ENCODE measurements at regions of chr5 and their contacts with region 1.

Region 1: GRCh38 chr5:132556763-132557477 is at the start of gene RAD50:
- DNase-seq: peak; percentile 79 to 96 (median 88)
- ATAC-seq: peak; percentile 94
- H3K4me3 ChIP-seq: peak within 1 kb of the TSS; percentile 83
- H3K4me3 Mint-ChIP-seq: peak within 1 kb of the TSS; percentile 95
- H3K27ac ChIP-seq: peak within 1 kb of the TSS; percentile 76 to 78
- H3K27ac Mint-ChIP-seq: peak within 1 kb of the TSS; percentile 98
- H3K4me1 ChIP-seq: peaks cover 22% of the 10 kb centered on the region
- H3K4me1 Mint-ChIP-seq: peaks cover 43% of the 10 kb centered on the region
- H3K27me3 ChIP-seq: no peaks in the 10 kb centered on the region
- H3K27me3 Mint-ChIP-seq: no peaks in the 10 kb centered on the region
- CTCF ChIP-seq: no peak
- total RNA-seq, gene RAD50: 12.7 to 13.4 TPM

Region 2: DNA sequence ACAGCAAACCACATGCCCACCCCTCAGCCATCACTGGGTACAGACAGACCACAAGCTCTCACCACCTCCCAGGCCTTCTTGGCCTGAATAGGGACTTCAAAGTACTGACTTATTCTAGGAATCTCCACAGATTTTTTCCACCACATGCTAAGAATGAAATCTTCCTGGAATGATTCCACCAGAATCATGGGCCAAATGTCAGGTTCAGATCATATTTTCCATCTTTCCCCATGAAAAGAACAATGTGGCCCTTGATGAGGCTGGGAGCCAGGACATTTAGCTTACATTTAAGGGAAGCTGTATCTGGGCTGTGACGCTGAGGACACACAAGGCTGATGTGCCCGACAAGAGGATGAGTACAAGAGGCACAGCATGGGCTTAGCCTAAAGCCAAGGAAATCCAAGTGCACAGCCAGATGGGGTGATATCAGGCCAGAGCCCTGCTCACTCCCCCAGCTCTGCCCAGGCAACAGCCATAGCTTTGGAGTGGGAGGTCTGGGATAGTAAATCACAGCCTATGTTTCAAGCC is 573.6 kb before region 1 on chr5:
- CTCF ChIA-PET with region 1: no interaction called
- POLR2A ChIA-PET with region 1: no interaction called
- intact Hi-C with region 1: no loop called
- DNase-seq: no peak
- ATAC-seq: no peak
- H3K4me3 ChIP-seq: no peak overlapping the region
- H3K4me3 Mint-ChIP-seq: no peak overlapping the region
- H3K27ac ChIP-seq: no peak overlapping the region
- H3K27ac Mint-ChIP-seq: no peak overlapping the region
- H3K4me1 ChIP-seq: peaks cover 10% of the 10 kb centered on the region
- H3K4me1 Mint-ChIP-seq: peaks cover 19% of the 10 kb centered on the region
- H3K27me3 ChIP-seq: no peaks in the 10 kb centered on the region
- H3K27me3 Mint-ChIP-seq: no peaks in the 10 kb centered on the region
- CTCF ChIP-seq: no peak

Region 3: DNA sequence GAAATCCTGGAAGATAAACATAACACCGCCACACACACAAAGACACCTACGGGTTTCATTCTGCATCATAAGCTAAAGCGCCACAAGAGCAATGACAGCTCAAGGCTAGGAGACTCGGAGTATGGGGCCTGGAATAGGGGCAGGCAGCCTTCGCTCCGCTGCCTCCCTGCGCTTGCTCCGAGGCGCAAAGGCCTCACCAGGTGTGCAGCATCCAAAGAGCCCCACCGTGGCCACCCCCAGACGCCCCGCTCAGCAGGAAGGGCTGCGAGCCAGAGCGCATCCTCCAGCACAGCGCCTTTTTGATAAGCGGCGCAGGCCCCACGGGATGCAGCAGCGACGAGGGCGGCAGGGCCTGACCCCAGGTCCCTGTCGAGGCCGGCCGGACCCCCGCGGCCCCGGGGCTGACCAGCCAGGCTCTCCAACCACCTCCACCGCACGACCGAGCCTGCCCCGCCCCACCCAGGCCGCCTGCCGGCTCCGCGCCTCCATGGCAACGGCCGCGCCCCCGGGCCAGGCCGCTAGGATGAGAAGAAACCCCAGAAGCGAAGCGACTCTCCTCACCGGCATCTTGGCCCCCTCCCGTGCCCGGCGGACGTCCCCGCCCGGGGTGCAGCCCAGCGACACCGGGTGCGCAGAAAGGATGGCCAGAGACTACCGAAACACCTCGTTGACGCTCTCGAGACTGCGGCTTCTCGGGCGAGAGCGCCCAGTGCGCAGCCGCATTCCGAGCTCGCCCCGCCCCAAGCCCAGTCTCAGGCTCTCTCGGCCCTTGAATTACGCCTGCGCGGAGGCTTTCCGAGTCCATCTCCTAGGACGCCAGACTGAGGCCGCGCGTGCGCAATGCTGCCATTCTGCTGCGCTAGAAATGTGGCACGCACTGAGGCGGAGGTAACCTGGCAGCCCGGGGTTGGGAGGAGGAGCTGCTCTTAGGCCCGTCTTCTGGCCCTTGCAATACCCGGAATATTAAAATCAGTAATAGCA is 180.2 kb after region 1 on chr5 and contains the start of gene KIF3A:
- CTCF ChIA-PET with region 1: no interaction called
- POLR2A ChIA-PET with region 1: interaction called, 7 read pairs
- intact Hi-C with region 1: loop called in 1 of 2 experiments (anchors 5 kb)
- DNase-seq: peak; percentile 96 to 100 (median 98)
- ATAC-seq: peak; percentile 86
- H3K4me3 ChIP-seq: peak within 1 kb of the TSS; percentile 79
- H3K4me3 Mint-ChIP-seq: peak within 1 kb of the TSS; percentile 87
- H3K27ac ChIP-seq: peak within 1 kb of the TSS; percentile 74 to 81
- H3K27ac Mint-ChIP-seq: peak within 1 kb of the TSS; percentile 76
- H3K4me1 ChIP-seq: peaks cover 16% of the 10 kb centered on the region
- H3K4me1 Mint-ChIP-seq: peaks cover 31% of the 10 kb centered on the region
- H3K27me3 ChIP-seq: no peaks in the 10 kb centered on the region
- H3K27me3 Mint-ChIP-seq: no peaks in the 10 kb centered on the region
- CTCF ChIP-seq: peak; percentile 32
- total RNA-seq, gene KIF3A: 10.2 to 12.4 TPM